ENCODE measurements at regions of chr1 and their contacts with region 1.

Region 1: GRCh38 chr1:11059990-11060830 is at the start of gene SRM:
- DNase-seq: peak; percentile 84 to 96 (median 89)
- ATAC-seq: peak; percentile 92 to 93
- H3K4me3 Mint-ChIP-seq: peak within 1 kb of the TSS; percentile 90 to 95 (median 94)
- H3K27ac Mint-ChIP-seq: peak within 1 kb of the TSS; percentile 89 to 97 (median 94)
- H3K4me1 Mint-ChIP-seq: peaks cover 15 to 41% (median 33%) of the 10 kb centered on the region in 4 donors
- H3K27me3 Mint-ChIP-seq: no peaks in the 10 kb centered on the region
- polyA plus RNA-seq, gene SRM: 95.2 to 204 (median 97.9) TPM

Region 2: GRCh38 chr1:11012250-11013171 is 47.7 kb before region 1 on chr1 and contains the start of gene TARDBP:
- POLR2A ChIA-PET with region 1: interaction called, 21 read pairs
- DNase-seq: peak; percentile 81 to 99 (median 90)
- ATAC-seq: peak; percentile 88 to 89
- H3K4me3 Mint-ChIP-seq: peak within 1 kb of the TSS; percentile 84 to 96 (median 90)
- H3K27ac Mint-ChIP-seq: peak within 1 kb of the TSS; percentile 96 to 99 (median 98)
- H3K4me1 Mint-ChIP-seq: peaks cover 6 to 43% (median 36%) of the 10 kb centered on the region in 4 donors
- H3K27me3 Mint-ChIP-seq: no peaks in the 10 kb centered on the region
- polyA plus RNA-seq, gene TARDBP: 46.6 to 65.2 (median 54.2) TPM

Region 3: DNA sequence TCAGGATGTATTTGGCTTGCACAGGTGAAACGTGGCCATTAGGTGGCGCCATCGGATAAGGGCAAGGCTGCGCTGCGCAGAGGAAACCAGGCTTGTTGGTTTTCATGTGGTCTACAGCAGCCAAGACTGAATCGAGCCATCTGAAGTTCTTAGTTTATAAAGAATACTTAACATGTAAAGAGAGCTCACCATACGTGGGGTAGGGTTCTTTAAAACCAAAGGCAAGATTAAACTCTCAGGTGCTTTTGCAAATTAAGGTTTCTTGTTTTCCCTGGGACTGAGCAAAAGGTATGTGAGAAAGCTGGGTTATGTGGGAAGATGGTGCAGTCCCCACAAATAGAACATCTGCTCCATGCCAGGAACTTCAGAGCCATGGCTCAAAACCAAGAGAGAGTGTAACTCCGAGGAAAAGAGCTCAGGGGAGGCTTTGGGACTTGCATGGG is 22.4 kb before region 1 on chr1:
- POLR2A ChIA-PET with region 1: interaction called, 29 read pairs
- DNase-seq: peak; percentile 79 to 94 (median 88)
- ATAC-seq: peak; percentile 100
- H3K4me3 Mint-ChIP-seq: no peak overlapping the region
- H3K27ac Mint-ChIP-seq: peak overlapping the region in 1 of 10 donors; percentile 37
- H3K4me1 Mint-ChIP-seq: peaks cover 0 to 7% (median 6%) of the 10 kb centered on the region in 4 donors
- H3K27me3 Mint-ChIP-seq: peaks cover 0 to 4% (median 4%) of the 10 kb centered on the region in 5 donors

Measured in naive thymus-derived CD8-positive, alpha-beta T cell (primary cell).